ENCODE measurements at regions of chr22 and their contacts with region 1.

Region 1: GRCh38 chr22:41091132-41092022 is 1.0 kb upstream of the EP300 start:
- DNase-seq: peak; percentile 99 to 100 (median 99)
- ATAC-seq: peak; percentile 90 to 96 (median 91)
- H3K4me3 ChIP-seq: peak overlapping the region; percentile 94 to 96 (median 94)
- H3K27ac ChIP-seq: peak overlapping the region; percentile 98 to 100 (median 100)
- H3K4me1 ChIP-seq: peaks cover 0 to 12% (median 9%) of the 10 kb centered on the region in 3 donors
- H3K27me3 ChIP-seq: no peaks in the 10 kb centered on the region
- CTCF ChIP-seq: no peak

Region 2: GRCh38 chr22:40950962-40951794 is 140.2 kb before region 1 on chr22 and contains the start of gene RBX1:
- intact Hi-C with region 1: loop called in 2 of 3 experiments (anchors 5 to 10 kb)
- DNase-seq: peak; percentile 97 to 99 (median 98)
- ATAC-seq: peak; percentile 93 to 97 (median 93)
- H3K4me3 ChIP-seq: peak within 1 kb of the TSS; percentile 60 to 89 (median 82)
- H3K27ac ChIP-seq: peak within 1 kb of the TSS; percentile 62 to 94 (median 90)
- H3K4me1 ChIP-seq: peaks cover 3 to 14% (median 11%) of the 10 kb centered on the region in 3 donors
- H3K27me3 ChIP-seq: no peaks in the 10 kb centered on the region
- CTCF ChIP-seq: no peak
- total RNA-seq, gene RBX1: 9.9 to 18.3 (median 14.0) TPM

Region 3: DNA sequence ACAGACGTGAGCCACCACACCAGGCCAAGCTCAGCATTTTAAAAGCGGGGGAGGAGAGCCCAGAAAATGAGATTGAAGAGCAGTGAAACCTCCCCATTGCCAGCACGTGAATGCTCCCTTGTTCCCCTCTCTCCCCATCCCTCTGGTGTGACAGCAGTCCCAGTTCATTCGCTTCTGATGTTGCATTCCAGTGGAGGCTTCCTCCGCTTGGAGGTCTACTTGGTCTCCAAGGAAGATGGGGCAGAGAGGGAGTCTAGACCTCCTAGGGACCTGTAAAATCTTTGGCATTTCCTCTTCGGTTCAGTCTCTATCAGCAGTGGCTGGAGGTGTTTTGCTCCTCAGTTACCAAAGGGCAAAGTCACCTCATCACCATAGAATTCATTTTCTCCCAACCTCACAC is 29.2 kb before region 1 on chr22:
- intact Hi-C with region 1: no loop called
- DNase-seq: no peak
- ATAC-seq: no peak
- H3K4me3 ChIP-seq: no peak overlapping the region
- H3K27ac ChIP-seq: no peak overlapping the region
- H3K4me1 ChIP-seq: no peaks in the 10 kb centered on the region
- H3K27me3 ChIP-seq: no peaks in the 10 kb centered on the region
- CTCF ChIP-seq: no peak

Measured in pancreas (tissue), 10 donors.